ENCODE measurements at regions of chr11 and their contacts with region 1.

Region 1: GRCh38 chr11:64324692-64325469 is 7.0 kb downstream of the PRDX5 start:
- DNase-seq: no peak
- H3K4me3 ChIP-seq: no peak overlapping the region
- H3K4me3 Mint-ChIP-seq: no peak overlapping the region
- H3K27ac Mint-ChIP-seq: peak overlapping the region; percentile 30
- H3K4me1 ChIP-seq: peaks cover 9% of the 10 kb centered on the region
- H3K4me1 Mint-ChIP-seq: peaks cover 11% of the 10 kb centered on the region
- H3K27me3 ChIP-seq: no peaks in the 10 kb centered on the region
- H3K27me3 Mint-ChIP-seq: no peaks in the 10 kb centered on the region
- CTCF ChIP-seq: no peak

Region 2: DNA sequence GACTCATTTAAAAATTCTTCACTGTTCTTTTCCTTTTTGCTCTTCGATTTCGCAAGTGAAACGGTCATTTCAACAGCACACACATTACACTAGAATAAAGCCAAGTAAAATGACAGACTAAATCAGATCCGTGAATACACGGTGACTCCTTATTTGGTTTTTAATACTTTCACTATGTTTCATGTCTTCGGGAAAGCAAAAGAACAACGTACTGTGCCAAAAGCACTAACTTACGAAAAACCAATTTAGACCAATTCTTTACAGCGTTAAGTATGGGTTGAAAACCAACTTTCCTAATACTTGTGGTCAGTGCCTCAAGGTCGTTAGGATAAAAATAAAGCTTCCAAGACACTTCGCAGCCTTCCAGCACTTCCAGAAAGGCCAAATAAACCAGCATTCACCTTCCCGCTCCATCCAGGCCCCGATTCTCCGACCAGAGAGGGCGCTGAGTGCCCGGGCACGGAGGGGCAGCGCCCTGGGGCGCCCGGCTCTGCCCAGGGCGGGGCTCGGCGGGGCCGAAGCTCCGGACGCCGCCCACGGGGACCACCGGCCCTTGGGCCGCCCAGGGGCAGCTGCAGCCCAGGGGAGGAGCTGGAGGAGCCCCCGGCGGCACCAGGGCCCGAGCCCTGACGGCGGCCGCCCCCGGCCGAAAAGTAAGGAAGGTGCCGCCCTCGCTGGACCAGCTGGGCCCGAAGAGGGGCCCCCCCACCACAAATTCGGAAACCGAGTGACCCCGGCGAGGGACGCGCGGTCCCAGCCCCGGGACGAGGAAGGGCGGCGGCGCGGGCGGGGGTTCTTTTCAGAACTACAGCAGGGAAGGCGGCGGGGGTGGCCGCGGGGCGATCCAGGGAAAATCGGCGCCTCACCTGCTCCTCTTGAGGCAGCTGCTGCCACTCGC is 654.2 kb before region 1 on chr11:
- CTCF ChIA-PET with region 1: no interaction called
- POLR2A ChIA-PET with region 1: no interaction called
- intact Hi-C with region 1: no loop called
- DNase-seq: peak in 1 of 2 experiments; percentile 71
- H3K4me3 ChIP-seq: peak overlapping the region; percentile 92
- H3K4me3 Mint-ChIP-seq: peak overlapping the region; percentile 82
- H3K27ac Mint-ChIP-seq: peak overlapping the region; percentile 67
- H3K4me1 ChIP-seq: peaks cover 19% of the 10 kb centered on the region
- H3K4me1 Mint-ChIP-seq: peaks cover 18% of the 10 kb centered on the region
- H3K27me3 ChIP-seq: no peaks in the 10 kb centered on the region
- H3K27me3 Mint-ChIP-seq: no peaks in the 10 kb centered on the region
- CTCF ChIP-seq: peak in 1 of 2 experiments; percentile 59

Region 3: GRCh38 chr11:64297699-64298358 is 27.1 kb before region 1 on chr11:
- CTCF ChIA-PET with region 1: no interaction called
- POLR2A ChIA-PET with region 1: no interaction called
- intact Hi-C with region 1: no loop called
- DNase-seq: no peak
- H3K4me3 ChIP-seq: no peak overlapping the region
- H3K4me3 Mint-ChIP-seq: no peak overlapping the region
- H3K27ac Mint-ChIP-seq: no peak overlapping the region
- H3K4me1 ChIP-seq: peaks cover 5% of the 10 kb centered on the region; the same call in 1 of the 2 replicates
- H3K4me1 Mint-ChIP-seq: no peaks in the 10 kb centered on the region
- H3K27me3 ChIP-seq: peaks cover 4% of the 10 kb centered on the region
- H3K27me3 Mint-ChIP-seq: peaks cover 10% of the 10 kb centered on the region
- CTCF ChIP-seq: no peak

Region 4: GRCh38 chr11:64341851-64342791 is 17.2 kb after region 1 on chr11:
- CTCF ChIA-PET with region 1: no interaction called
- POLR2A ChIA-PET with region 1: interaction called, 14 read pairs
- intact Hi-C with region 1: no loop called
- DNase-seq: no peak
- H3K4me3 ChIP-seq: no peak overlapping the region
- H3K4me3 Mint-ChIP-seq: no peak overlapping the region
- H3K27ac Mint-ChIP-seq: no peak overlapping the region
- H3K4me1 ChIP-seq: no peaks in the 10 kb centered on the region
- H3K4me1 Mint-ChIP-seq: peaks cover 2% of the 10 kb centered on the region
- H3K27me3 ChIP-seq: no peaks in the 10 kb centered on the region
- H3K27me3 Mint-ChIP-seq: no peaks in the 10 kb centered on the region
- CTCF ChIP-seq: no peak

Region 5: GRCh38 chr11:64698427-64698826 is 373.5 kb after region 1 on chr11:
- CTCF ChIA-PET with region 1: no interaction called
- POLR2A ChIA-PET with region 1: no interaction called
- intact Hi-C with region 1: no loop called
- DNase-seq: no peak
- H3K4me3 ChIP-seq: no peak overlapping the region
- H3K4me3 Mint-ChIP-seq: no peak overlapping the region
- H3K27ac Mint-ChIP-seq: no peak overlapping the region
- H3K4me1 ChIP-seq: no peaks in the 10 kb centered on the region
- H3K4me1 Mint-ChIP-seq: peaks cover 9% of the 10 kb centered on the region
- H3K27me3 ChIP-seq: peaks cover 2% of the 10 kb centered on the region; the same call in 1 of the 2 replicates
- H3K27me3 Mint-ChIP-seq: peaks cover 9% of the 10 kb centered on the region
- CTCF ChIP-seq: no peak

Measured in Caco-2 (cell line).